PC-9 (cell line): ENCODE measurements at regions of chr11 and their contacts with region 1.

Region 1: GRCh38 chr11:59550368-59550841 is 39.1 kb downstream of the OR4D9 start:
- DNase-seq: peak; percentile 91 to 94
- H3K4me3 ChIP-seq: peak overlapping the region; percentile 71
- H3K27ac ChIP-seq: peak overlapping the region; percentile 85
- H3K4me1 ChIP-seq: peaks cover 31% of the 10 kb centered on the region
- H3K27me3 ChIP-seq: no peaks in the 10 kb centered on the region
- CTCF ChIP-seq: peak; percentile 56; the same call in 1 of the 2 replicates

Region 2: DNA sequence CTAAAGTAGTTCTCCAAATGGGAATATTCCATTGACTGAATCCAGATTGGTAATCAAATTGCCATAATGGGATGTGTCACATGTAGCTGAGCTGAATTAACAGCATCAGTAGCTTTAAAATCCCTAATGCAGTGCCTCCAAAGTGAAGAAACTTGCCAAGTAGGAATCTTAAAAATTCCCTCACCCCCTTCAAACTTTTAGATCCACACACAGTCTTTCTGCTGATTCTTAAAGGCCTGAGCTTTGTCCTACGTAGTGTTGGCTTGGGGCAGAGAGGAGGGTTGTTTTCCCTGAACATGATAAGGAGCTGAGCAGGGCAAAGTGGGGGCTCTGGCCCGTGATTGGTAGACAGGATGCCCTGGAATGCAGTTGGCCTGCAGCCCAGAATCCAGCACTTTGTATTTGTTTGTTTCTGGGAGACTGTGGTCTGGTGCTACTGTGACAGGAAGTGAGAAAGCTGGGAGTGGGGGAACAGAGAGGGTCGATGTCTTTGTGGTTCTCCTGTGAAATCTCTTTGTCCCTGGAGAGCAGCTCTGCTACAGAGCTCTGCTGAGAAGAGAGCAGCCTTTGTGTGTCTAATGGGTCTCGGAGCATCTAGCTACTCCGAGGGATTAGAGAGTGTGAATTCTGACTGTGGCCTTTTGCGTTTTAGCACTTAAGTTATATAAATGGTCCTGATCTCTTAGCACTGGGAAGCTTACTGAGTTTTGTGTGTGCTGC is 1771.9 kb before region 1 on chr11:
- CTCF ChIA-PET with region 1: no interaction called
- POLR2A ChIA-PET with region 1: no interaction called
- intact Hi-C with region 1: loop called (anchors 10 kb)
- DNase-seq: peak; percentile 98 to 99
- H3K4me3 ChIP-seq: peak overlapping the region; percentile 50; the same call in 1 of the 2 replicates
- H3K27ac ChIP-seq: peak overlapping the region; percentile 93
- H3K4me1 ChIP-seq: peaks cover 93% of the 10 kb centered on the region
- H3K27me3 ChIP-seq: no peaks in the 10 kb centered on the region
- CTCF ChIP-seq: no peak

Region 3: GRCh38 chr11:59560702-59561469 is 10.5 kb after region 1 on chr11:
- CTCF ChIA-PET with region 1: no interaction called
- POLR2A ChIA-PET with region 1: interaction called, 5 read pairs
- intact Hi-C with region 1: loop called (anchors 1 kb)
- DNase-seq: peak; percentile 81 to 96
- H3K4me3 ChIP-seq: peak overlapping the region; percentile 79
- H3K27ac ChIP-seq: peak overlapping the region; percentile 84
- H3K4me1 ChIP-seq: peaks cover 22% of the 10 kb centered on the region
- H3K27me3 ChIP-seq: no peaks in the 10 kb centered on the region
- CTCF ChIP-seq: no peak

Region 4: GRCh38 chr11:59615637-59616395 is 65.4 kb after region 1 on chr11 and contains the start of gene OSBP:
- CTCF ChIA-PET with region 1: no interaction called
- POLR2A ChIA-PET with region 1: no interaction called
- intact Hi-C with region 1: loop called (anchors 2 kb)
- DNase-seq: peak; percentile 99 to 100
- H3K4me3 ChIP-seq: peak within 1 kb of the TSS; percentile 71
- H3K27ac ChIP-seq: peak within 1 kb of the TSS; percentile 67
- H3K4me1 ChIP-seq: peaks cover 37% of the 10 kb centered on the region
- H3K27me3 ChIP-seq: no peaks in the 10 kb centered on the region
- CTCF ChIP-seq: no peak
- total RNA-seq, gene OSBP: 40.4 and 49.7 TPM in 2 replicates

Region 5: GRCh38 chr11:59810189-59810910 is 259.9 kb after region 1 on chr11 and contains the start of gene MRPL16:
- CTCF ChIA-PET with region 1: no interaction called
- POLR2A ChIA-PET with region 1: no interaction called
- intact Hi-C with region 1: loop called (anchors 2 kb)
- DNase-seq: peak; percentile 89 to 92
- H3K4me3 ChIP-seq: peak within 1 kb of the TSS; percentile 73
- H3K27ac ChIP-seq: peak within 1 kb of the TSS; percentile 58
- H3K4me1 ChIP-seq: peaks cover 14% of the 10 kb centered on the region; the same call in 1 of the 2 replicates
- H3K27me3 ChIP-seq: no peaks in the 10 kb centered on the region
- CTCF ChIP-seq: peak; percentile 57; the same call in 1 of the 2 replicates
- total RNA-seq, gene MRPL16: 64.7 and 82.0 TPM in 2 replicates

Region 6: GRCh38 chr11:59857444-59858434 is 307.3 kb after region 1 on chr11:
- CTCF ChIA-PET with region 1: no interaction called
- POLR2A ChIA-PET with region 1: no interaction called
- intact Hi-C with region 1: loop called (anchors 2 kb)
- DNase-seq: peak; percentile 67 to 80
- H3K4me3 ChIP-seq: no peak overlapping the region
- H3K27ac ChIP-seq: peak overlapping the region; percentile 78
- H3K4me1 ChIP-seq: peaks cover 33% of the 10 kb centered on the region
- H3K27me3 ChIP-seq: no peaks in the 10 kb centered on the region
- CTCF ChIP-seq: no peak